ENCODE measurements at regions of chr20 and their contacts with region 1.

Region 1: DNA sequence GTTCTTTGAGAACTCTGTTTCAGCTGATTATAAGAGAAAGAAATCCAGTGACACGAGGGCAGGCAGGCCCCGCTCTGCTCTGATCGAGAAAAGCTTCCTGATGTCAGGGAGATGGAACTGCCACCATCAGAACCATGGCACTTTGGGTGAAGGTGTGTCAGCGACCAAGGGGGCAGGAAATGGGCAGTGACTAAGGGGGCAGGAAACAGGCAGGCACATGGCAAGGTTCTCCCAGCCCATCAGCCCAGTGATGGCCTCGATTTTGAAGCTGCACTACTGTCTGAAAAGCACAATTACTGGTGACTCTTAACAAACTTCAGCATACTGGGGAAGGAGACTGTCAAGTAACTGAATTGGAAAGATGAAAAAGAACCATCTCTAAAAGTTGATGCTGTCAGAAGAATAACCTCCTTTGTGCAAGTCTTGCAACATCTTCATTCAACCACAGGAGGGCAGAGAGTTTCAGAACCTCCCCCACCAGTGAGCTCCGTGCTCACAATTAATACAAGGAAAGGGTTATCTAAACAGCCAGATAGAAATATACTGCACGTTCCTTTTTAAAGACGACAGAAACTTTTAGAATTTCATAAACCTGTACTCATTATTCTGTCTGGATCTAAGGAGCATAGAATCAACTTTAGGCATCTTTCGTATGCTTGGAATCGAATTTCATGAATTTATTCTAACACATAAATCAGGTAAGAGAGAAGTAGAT is 39.1 kb downstream of the TMX4 start:
- DNase-seq: peak; percentile 41 to 46
- H3K4me3 ChIP-seq: no peak overlapping the region
- H3K4me3 Mint-ChIP-seq: no peak overlapping the region
- H3K27ac Mint-ChIP-seq: no peak overlapping the region
- H3K4me1 ChIP-seq: peaks cover 10% of the 10 kb centered on the region
- H3K4me1 Mint-ChIP-seq: no peaks in the 10 kb centered on the region
- H3K27me3 ChIP-seq: no peaks in the 10 kb centered on the region
- H3K27me3 Mint-ChIP-seq: no peaks in the 10 kb centered on the region
- CTCF ChIP-seq: peak; percentile 42 to 74

Region 2: DNA sequence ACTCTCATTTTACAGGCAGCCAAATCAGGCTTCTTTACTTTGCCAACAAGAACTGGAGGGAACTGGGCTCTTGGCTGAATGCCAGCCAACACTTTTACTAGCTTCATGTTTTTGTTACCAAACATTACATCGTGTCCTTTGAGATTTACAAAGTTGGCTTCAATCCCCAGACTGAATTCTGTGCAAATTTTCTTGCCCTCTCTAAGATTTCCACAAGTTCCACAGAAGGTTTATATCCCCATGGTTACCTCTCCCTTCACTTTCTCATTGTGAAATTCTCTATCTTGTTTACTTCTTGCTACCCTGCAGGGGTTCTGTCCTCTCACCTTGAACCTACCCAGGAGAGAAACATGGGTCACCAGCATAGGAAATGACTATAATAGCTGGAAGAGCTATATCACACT is 113.9 kb after region 1 on chr20:
- CTCF ChIA-PET with region 1: no interaction called
- POLR2A ChIA-PET with region 1: no interaction called
- intact Hi-C with region 1: no loop called
- DNase-seq: no peak
- H3K4me3 ChIP-seq: no peak overlapping the region
- H3K4me3 Mint-ChIP-seq: no peak overlapping the region
- H3K27ac Mint-ChIP-seq: no peak overlapping the region
- H3K4me1 ChIP-seq: no peaks in the 10 kb centered on the region
- H3K4me1 Mint-ChIP-seq: no peaks in the 10 kb centered on the region
- H3K27me3 ChIP-seq: no peaks in the 10 kb centered on the region
- H3K27me3 Mint-ChIP-seq: peaks cover 2% of the 10 kb centered on the region
- CTCF ChIP-seq: no peak

Region 3: GRCh38 chr20:8454137-8454712 is 473.7 kb after region 1 on chr20:
- CTCF ChIA-PET with region 1: no interaction called
- POLR2A ChIA-PET with region 1: no interaction called
- intact Hi-C with region 1: loop called (anchors 2 kb)
- DNase-seq: peak in 1 of 2 experiments; percentile 33
- H3K4me3 ChIP-seq: no peak overlapping the region
- H3K4me3 Mint-ChIP-seq: no peak overlapping the region
- H3K27ac Mint-ChIP-seq: no peak overlapping the region
- H3K4me1 ChIP-seq: no peaks in the 10 kb centered on the region
- H3K4me1 Mint-ChIP-seq: no peaks in the 10 kb centered on the region
- H3K27me3 ChIP-seq: no peaks in the 10 kb centered on the region
- H3K27me3 Mint-ChIP-seq: no peaks in the 10 kb centered on the region
- CTCF ChIP-seq: peak; percentile 44 to 59

Region 4: DNA sequence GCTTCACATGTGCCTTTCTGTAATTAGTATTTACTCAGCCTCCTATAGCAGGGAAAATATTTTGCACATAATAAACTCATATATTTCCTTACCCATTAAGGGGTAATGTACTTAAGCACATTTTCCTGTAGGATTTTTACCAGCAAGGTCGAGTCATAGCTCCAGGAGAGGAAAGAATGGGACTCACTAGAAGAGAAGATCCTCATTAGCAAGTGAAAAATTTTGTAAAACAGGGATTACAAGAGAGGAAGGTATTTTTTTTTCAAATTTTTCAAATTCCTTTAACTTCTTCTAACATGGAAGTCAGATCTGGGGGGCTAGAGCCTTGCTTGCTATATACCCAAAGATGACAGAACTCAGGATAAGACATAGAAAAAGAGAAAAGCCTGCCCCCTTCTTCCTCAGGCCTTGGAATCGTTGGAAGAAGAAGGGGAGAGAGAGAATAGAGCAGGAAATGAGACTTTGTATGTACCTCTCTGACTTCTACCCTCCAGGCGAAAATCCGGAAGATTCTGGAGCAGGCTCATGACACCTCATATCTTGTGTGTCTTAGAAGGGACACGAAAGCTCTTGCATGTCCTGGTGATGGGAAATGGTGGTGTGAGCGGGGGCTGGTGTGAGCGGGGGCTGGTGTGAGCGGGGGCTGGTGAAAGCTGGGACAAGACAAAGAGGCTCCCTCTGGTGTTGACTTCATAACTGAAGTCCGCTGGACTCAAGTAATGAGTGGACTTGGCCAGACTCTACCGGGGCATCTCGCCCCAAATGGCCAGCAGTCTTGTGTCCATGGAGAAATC is 831.5 kb after region 1 on chr20:
- CTCF ChIA-PET with region 1: interaction called, 11 read pairs
- POLR2A ChIA-PET with region 1: no interaction called
- intact Hi-C with region 1: no loop called
- DNase-seq: no peak
- H3K4me3 ChIP-seq: no peak overlapping the region
- H3K4me3 Mint-ChIP-seq: no peak overlapping the region
- H3K27ac Mint-ChIP-seq: no peak overlapping the region
- H3K4me1 ChIP-seq: 0 out of 2 replicates have a peak, but pooled peaks cover 6% of the 10 kb centered on the region
- H3K4me1 Mint-ChIP-seq: peaks cover 6% of the 10 kb centered on the region
- H3K27me3 ChIP-seq: no peaks in the 10 kb centered on the region
- H3K27me3 Mint-ChIP-seq: no peaks in the 10 kb centered on the region
- CTCF ChIP-seq: no peak

Measured in Caco-2 (cell line).